ENCODE measurements at regions of chr1 and their contacts with region 1.

Region 1: GRCh38 chr1:66446261-66447001 is 87.5 kb upstream of the SGIP1 start:
- DNase-seq: peak in 1 of 3 donors; percentile 56
- ATAC-seq: peak; percentile 86
- H3K4me3 ChIP-seq: no peak overlapping the region
- H3K4me1 ChIP-seq: no peaks in the 10 kb centered on the region
- CTCF ChIP-seq: peak; percentile 60

Region 2: GRCh38 chr1:66154394-66154793 is 292.0 kb before region 1 on chr1:
- intact Hi-C with region 1: no loop called
- DNase-seq: no peak
- ATAC-seq: no peak
- H3K4me3 ChIP-seq: no peak overlapping the region
- H3K4me1 ChIP-seq: no peaks in the 10 kb centered on the region
- CTCF ChIP-seq: no peak

Region 3: GRCh38 chr1:66242646-66243547 is 203.5 kb before region 1 on chr1:
- intact Hi-C with region 1: no loop called
- DNase-seq: peak; percentile 82 to 92 (median 88)
- ATAC-seq: peak; percentile 98
- H3K4me3 ChIP-seq: no peak overlapping the region
- H3K4me1 ChIP-seq: peaks cover 2% of the 10 kb centered on the region
- CTCF ChIP-seq: peak; percentile 88

Region 4: DNA sequence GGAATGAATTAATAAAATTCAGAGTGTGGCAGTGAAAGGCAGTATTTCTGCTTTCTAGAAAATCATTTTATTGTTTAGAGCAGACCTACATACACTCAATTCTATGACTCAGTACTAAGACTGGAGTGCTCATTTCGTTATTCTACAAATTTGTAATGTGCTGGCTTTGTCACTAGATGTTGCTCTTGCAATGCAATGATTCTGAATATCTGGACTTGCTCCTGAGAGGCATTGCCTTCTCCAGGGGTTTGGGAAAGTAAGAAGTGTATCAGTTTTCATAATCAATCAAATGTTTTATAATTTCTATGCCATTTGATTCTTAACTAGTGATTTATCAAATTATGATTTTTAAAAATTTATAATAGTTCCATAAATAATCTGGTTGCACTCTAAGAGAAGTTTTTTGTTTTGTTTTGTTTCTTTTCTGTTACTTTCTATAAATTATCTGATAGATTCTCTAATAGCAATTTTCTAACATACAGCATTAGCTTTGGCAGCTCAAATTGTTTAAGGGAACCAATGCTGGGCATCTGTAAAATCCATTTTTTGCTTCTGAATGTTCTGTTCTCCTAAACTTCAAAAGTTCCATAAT is 193.0 kb before region 1 on chr1:
- intact Hi-C with region 1: loop called (anchors 2 to 5 kb)
- DNase-seq: peak in 1 of 3 donors; percentile 53
- ATAC-seq: peak; percentile 89
- H3K4me3 ChIP-seq: no peak overlapping the region
- H3K4me1 ChIP-seq: no peaks in the 10 kb centered on the region
- CTCF ChIP-seq: no peak

Region 5: GRCh38 chr1:66563094-66563800 is 116.8 kb after region 1 on chr1:
- intact Hi-C with region 1: no loop called
- DNase-seq: peak in 1 of 3 donors; percentile 37
- ATAC-seq: peak; percentile 41
- H3K4me3 ChIP-seq: no peak overlapping the region
- H3K4me1 ChIP-seq: no peaks in the 10 kb centered on the region
- CTCF ChIP-seq: no peak

Measured in mucosa of descending colon (tissue), 3 donors.